Caco-2 (cell line): ENCODE measurements at regions of chr19 and their contacts with region 1.

Region 1: DNA sequence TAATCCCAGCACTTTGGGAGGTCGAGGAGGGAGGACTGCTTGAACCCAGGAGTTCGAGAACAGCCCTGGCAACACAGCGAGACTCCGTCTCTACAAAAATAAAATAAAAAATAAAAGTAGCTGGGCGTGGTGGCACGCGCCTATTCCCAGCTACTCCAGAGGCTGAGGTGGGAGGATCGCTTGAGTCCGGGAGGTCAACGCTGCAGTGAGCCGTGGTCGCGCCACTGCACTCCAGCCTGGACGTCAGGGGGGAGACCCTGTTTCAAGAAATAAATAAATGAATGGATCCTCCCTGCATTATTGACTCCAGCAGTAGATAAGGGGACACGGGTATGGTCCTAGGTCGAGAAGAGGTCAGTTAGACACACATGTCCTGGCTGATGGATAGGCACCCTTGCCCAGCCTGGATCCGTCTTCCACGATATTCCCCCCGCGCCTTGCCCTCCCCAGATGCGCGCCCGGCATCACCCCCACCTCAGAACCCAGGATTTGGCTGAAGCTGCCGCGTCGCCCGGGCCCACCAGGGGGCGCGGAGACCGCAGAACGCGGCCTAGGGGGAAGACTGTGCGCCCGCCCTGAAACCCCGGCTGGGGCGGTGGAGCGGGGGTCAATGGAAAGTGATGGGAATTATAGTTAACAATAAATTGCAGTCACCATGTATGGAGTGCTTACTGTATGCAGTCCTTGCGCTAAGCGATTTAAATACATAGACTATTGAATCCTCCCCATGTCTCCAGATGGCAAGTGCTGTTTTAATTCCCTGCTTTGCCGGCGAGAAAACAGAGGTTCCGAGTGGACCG is 2.1 kb upstream of the HOOK2 start:
- DNase-seq: peak; percentile 73 to 88
- H3K4me3 ChIP-seq: peak overlapping the region; percentile 53
- H3K4me3 Mint-ChIP-seq: peak overlapping the region; percentile 85
- H3K27ac Mint-ChIP-seq: no peak overlapping the region
- H3K4me1 ChIP-seq: peaks cover 20% of the 10 kb centered on the region
- H3K4me1 Mint-ChIP-seq: peaks cover 19% of the 10 kb centered on the region
- H3K27me3 ChIP-seq: no peaks in the 10 kb centered on the region
- H3K27me3 Mint-ChIP-seq: no peaks in the 10 kb centered on the region
- CTCF ChIP-seq: peak; percentile 85 to 97

Region 2: GRCh38 chr19:12722566-12723380 is 54.6 kb before region 1 on chr19:
- CTCF ChIA-PET with region 1: no interaction called
- POLR2A ChIA-PET with region 1: no interaction called
- intact Hi-C with region 1: loop called (anchors 5 kb)
- DNase-seq: peak; percentile 94 to 98
- H3K4me3 ChIP-seq: peak overlapping the region; percentile 92
- H3K4me3 Mint-ChIP-seq: peak overlapping the region; percentile 91
- H3K27ac Mint-ChIP-seq: peak overlapping the region; percentile 77
- H3K4me1 ChIP-seq: 0 out of 2 replicates have a peak, but pooled peaks cover 8% of the 10 kb centered on the region
- H3K4me1 Mint-ChIP-seq: peaks cover 14% of the 10 kb centered on the region
- H3K27me3 ChIP-seq: no peaks in the 10 kb centered on the region
- H3K27me3 Mint-ChIP-seq: no peaks in the 10 kb centered on the region
- CTCF ChIP-seq: no peak

Region 3: DNA sequence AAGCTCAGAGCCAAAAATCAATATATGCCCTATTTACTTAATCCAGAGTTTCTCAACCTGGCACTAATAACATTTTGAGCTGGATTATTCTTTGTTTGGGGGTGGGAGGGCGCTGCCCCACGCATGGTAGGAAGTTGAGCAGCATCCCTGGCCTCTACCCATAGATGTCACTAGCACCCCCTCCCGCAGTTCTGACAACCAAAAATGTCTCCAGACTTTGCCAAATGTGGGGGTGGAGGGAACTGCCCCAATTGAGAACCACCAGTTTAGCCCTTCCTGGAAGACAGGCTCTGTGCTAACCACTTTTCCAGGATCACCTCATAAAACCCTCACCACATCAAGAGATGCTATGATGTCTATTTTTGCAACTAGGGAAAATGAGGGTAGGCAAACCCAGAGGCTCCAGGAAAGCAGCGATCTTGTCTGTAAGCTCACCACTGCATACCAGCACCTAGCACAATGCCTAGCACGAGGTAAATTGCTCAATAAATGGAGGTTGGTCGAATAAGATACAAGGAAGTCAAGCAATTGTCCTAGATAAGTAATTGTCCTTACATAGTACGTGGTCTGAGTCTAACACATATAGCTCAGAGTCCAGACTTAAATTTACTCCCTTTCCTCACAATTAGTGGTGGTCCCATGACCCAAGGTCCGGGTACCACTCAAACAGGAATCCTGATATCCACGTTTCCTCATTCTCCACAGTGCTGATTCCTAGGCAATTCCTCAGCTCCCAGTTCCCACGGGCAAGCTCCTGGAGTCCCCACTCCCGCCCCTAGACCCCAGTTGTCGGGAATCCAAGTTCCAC is 43.8 kb before region 1 on chr19:
- CTCF ChIA-PET with region 1: interaction called, 7 read pairs
- POLR2A ChIA-PET with region 1: no interaction called
- intact Hi-C with region 1: loop called (anchors 1 kb)
- DNase-seq: peak in 1 of 2 experiments; percentile 52
- H3K4me3 ChIP-seq: peak overlapping the region; percentile 73
- H3K4me3 Mint-ChIP-seq: peak overlapping the region; percentile 92
- H3K27ac Mint-ChIP-seq: peak overlapping the region; percentile 88
- H3K4me1 ChIP-seq: peaks cover 17% of the 10 kb centered on the region
- H3K4me1 Mint-ChIP-seq: peaks cover 15% of the 10 kb centered on the region
- H3K27me3 ChIP-seq: no peaks in the 10 kb centered on the region
- H3K27me3 Mint-ChIP-seq: no peaks in the 10 kb centered on the region
- CTCF ChIP-seq: peak in 1 of 2 experiments; percentile 56

Region 4: GRCh38 chr19:12789904-12790619 is 12.6 kb after region 1 on chr19:
- CTCF ChIA-PET with region 1: interaction called, 38 read pairs
- POLR2A ChIA-PET with region 1: interaction called, 36 read pairs
- intact Hi-C with region 1: loop called (anchors 1 kb)
- DNase-seq: peak; percentile 95 to 96
- H3K4me3 ChIP-seq: peak overlapping the region; percentile 40
- H3K4me3 Mint-ChIP-seq: peak overlapping the region; percentile 92
- H3K27ac Mint-ChIP-seq: peak overlapping the region; percentile 83
- H3K4me1 ChIP-seq: peaks cover 25% of the 10 kb centered on the region
- H3K4me1 Mint-ChIP-seq: peaks cover 21% of the 10 kb centered on the region
- H3K27me3 ChIP-seq: no peaks in the 10 kb centered on the region
- H3K27me3 Mint-ChIP-seq: no peaks in the 10 kb centered on the region
- CTCF ChIP-seq: no peak

Region 5: GRCh38 chr19:12796146-12797071 is 19.0 kb after region 1 on chr19:
- CTCF ChIA-PET with region 1: interaction called, 38 read pairs
- POLR2A ChIA-PET with region 1: interaction called, 36 read pairs
- intact Hi-C with region 1: loop called (anchors 1 kb)
- DNase-seq: peak; percentile 81 to 83
- H3K4me3 ChIP-seq: no peak overlapping the region
- H3K4me3 Mint-ChIP-seq: peak overlapping the region; percentile 45
- H3K27ac Mint-ChIP-seq: peak overlapping the region; percentile 21
- H3K4me1 ChIP-seq: peaks cover 9% of the 10 kb centered on the region
- H3K4me1 Mint-ChIP-seq: peaks cover 5% of the 10 kb centered on the region
- H3K27me3 ChIP-seq: no peaks in the 10 kb centered on the region
- H3K27me3 Mint-ChIP-seq: no peaks in the 10 kb centered on the region
- CTCF ChIP-seq: peak; percentile 91

Region 6: DNA sequence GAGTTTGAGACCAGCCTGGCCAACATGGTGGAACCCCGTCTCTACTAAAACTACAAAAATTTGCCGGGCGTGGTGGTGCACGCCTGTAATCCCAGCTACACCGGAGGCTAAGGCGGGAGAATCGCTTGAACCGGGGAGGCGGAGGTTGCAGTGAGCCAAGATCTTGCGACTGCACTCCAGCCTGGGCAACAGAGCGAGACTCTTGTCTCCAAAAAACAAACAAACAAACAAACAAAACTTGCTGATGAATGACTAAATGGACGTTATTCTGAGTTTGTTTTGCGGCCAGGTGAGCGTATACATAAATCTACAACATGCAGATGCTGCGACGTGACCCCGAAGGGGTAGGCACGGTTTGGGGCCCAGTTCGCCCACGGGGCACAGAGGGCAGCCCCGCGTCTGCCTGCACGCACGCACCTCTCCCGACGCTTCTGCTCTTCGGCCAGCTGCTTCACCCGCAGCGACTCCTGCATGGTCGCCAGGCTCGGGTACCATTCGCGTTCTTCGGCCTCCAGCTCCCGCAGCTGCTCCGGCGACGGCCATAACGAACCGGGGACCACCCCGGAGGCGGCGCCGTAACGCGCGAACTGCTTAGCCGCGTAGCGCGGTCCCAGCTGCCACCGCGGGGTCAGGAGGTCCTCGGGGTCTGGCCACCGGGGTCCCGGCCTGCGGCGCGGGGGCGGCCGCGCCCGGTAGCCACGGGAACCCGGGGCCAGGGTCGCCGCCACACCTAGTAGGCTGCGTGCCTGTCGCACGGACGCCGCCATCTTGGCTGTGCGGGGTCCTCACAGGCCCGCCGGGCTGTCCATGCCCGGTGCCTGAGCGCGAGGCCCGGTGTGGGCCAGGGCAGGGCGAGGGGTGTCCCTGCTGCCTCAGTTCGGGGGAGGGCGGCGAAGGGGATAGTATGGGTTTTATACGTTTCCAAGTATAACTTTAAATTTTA is 179.3 kb after region 1 on chr19 and contains the start of gene GADD45GIP1:
- CTCF ChIA-PET with region 1: no interaction called
- POLR2A ChIA-PET with region 1: no interaction called
- intact Hi-C with region 1: no loop called
- DNase-seq: peak; percentile 86 to 92
- H3K4me3 ChIP-seq: peak within 1 kb of the TSS; percentile 99
- H3K4me3 Mint-ChIP-seq: peak within 1 kb of the TSS; percentile 74
- H3K27ac Mint-ChIP-seq: peak within 1 kb of the TSS; percentile 85
- H3K4me1 ChIP-seq: peaks cover 9% of the 10 kb centered on the region; the same call in 1 of the 2 replicates
- H3K4me1 Mint-ChIP-seq: peaks cover 7% of the 10 kb centered on the region
- H3K27me3 ChIP-seq: no peaks in the 10 kb centered on the region
- H3K27me3 Mint-ChIP-seq: no peaks in the 10 kb centered on the region
- CTCF ChIP-seq: no peak
- total RNA-seq, gene GADD45GIP1: 39.3 and 42.7 TPM in 2 replicates